ENCODE measurements at regions of chr22 and their contacts with region 1.

Region 1: DNA sequence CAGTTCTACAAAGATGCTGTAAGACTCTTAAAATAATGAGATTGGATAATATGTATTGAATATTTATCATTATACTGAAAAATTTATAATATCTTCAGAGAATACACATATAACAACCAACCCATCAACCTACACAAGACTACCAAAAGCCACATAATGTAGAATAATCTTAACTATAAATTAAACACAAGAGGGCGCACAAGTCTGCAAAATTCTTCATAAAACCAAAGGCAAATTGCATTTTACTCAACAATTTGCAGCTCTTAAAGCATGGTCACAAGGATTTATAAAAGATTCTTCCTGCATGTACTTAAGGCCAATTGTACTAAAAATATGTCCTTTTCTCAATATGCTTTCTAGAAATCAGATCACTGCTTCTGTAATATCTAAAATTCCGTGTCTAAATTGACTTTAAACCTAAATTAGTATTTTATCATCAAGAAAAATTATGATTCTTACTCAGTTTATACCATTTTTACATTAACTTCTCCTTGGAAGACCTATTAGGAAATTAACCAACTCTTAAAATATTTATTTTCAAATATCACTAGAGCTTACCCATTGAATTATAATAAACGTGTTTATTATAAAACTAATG is 79.0 kb downstream of the TTC28 start:
- DNase-seq: peak in 7 of 9 donors; percentile 30 to 66 (median 57)
- ATAC-seq: no peak
- H3K4me3 ChIP-seq: no peak overlapping the region
- H3K4me3 Mint-ChIP-seq: no peak overlapping the region
- H3K27ac ChIP-seq: no peak overlapping the region
- H3K27ac Mint-ChIP-seq: no peak overlapping the region
- H3K4me1 ChIP-seq: no peaks in the 10 kb centered on the region
- H3K4me1 Mint-ChIP-seq: no peaks in the 10 kb centered on the region
- H3K27me3 ChIP-seq: peaks cover 4 to 7% of the 10 kb centered on the region in 2 donors
- H3K27me3 Mint-ChIP-seq: peaks cover 10 to 64% (median 31%) of the 10 kb centered on the region in 5 donors

Region 2: DNA sequence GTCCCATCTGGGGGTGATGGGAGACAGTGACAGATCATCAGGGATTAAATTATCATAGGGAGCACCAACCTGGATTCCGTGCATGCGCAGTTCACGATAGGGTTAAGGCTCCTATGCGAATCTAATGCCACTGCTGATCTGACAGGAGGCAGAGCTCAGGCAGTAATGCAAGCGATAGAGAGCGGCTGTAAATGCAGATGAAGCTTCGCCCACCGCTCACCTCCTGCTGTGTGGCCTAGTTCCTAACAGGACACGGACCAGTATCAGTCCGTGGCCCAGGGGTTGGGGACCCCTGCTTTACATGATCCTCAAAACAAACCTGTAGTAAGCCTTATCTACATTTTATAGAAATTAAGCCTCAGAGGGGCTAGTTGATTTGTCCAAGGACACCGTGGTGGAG is 15.3 kb before region 1 on chr22:
- CTCF ChIA-PET with region 1: no interaction called
- POLR2A ChIA-PET with region 1: no interaction called
- intact Hi-C with region 1: no loop called
- DNase-seq: no peak
- ATAC-seq: no peak
- H3K4me3 ChIP-seq: no peak overlapping the region
- H3K4me3 Mint-ChIP-seq: no peak overlapping the region
- H3K27ac ChIP-seq: no peak overlapping the region
- H3K27ac Mint-ChIP-seq: no peak overlapping the region
- H3K4me1 ChIP-seq: no peaks in the 10 kb centered on the region
- H3K4me1 Mint-ChIP-seq: no peaks in the 10 kb centered on the region
- H3K27me3 ChIP-seq: no peaks in the 10 kb centered on the region
- H3K27me3 Mint-ChIP-seq: peaks cover 7 to 27% (median 22%) of the 10 kb centered on the region in 5 donors

Region 3: DNA sequence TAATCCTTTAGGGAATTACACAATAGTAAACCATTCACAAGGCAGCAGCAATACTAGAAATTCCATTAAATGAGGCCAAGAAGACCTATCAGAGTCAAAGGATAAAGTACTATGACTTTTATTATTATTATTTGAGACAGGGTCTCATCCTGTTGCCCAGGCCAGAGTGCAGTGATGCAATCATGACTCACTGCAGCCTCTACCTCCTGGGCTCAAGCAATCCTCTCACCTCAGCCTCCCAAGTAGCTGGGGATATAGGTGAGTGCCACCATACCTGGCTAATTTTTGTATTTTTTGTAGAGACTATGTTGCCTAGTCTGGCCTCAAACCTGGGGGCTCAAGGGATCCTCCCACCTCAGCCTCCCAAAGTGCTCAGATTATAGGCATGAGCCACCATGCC is 27.1 kb after region 1 on chr22:
- CTCF ChIA-PET with region 1: no interaction called
- POLR2A ChIA-PET with region 1: no interaction called
- intact Hi-C with region 1: no loop called
- DNase-seq: no peak
- ATAC-seq: no peak
- H3K4me3 ChIP-seq: no peak overlapping the region
- H3K4me3 Mint-ChIP-seq: no peak overlapping the region
- H3K27ac ChIP-seq: no peak overlapping the region
- H3K27ac Mint-ChIP-seq: no peak overlapping the region
- H3K4me1 ChIP-seq: no peaks in the 10 kb centered on the region
- H3K4me1 Mint-ChIP-seq: peaks cover 0 to 9% (median 0%) of the 10 kb centered on the region in 7 donors
- H3K27me3 ChIP-seq: peaks cover 0 to 3% of the 10 kb centered on the region in 2 donors
- H3K27me3 Mint-ChIP-seq: peaks cover 42 to 84% (median 68%) of the 10 kb centered on the region in 5 donors

Region 4: DNA sequence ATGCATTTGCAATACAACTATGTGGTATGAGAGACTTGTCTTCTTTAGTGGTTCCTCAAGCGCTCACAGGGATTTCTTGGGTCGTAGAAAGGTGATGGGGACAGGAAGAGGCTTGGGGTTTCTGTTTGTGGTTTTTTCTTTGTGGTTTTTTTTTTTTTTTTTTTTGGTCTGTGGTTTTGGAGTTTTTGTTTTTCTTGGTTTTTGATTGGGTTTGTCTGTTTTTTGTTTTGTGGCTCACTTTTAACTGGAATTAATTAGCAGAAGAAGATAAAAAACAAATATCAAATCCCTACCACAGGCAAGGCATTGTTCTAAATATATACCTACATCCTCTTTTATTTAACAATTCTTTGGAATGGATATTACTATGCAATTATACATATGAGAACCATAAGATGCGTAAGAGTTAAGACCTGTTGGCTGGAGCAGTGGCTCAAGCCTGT is 73.5 kb after region 1 on chr22:
- CTCF ChIA-PET with region 1: no interaction called
- POLR2A ChIA-PET with region 1: no interaction called
- intact Hi-C with region 1: loop called in 1 of 2 experiments (anchors 2 kb)
- DNase-seq: peak in 7 of 9 donors; percentile 57 to 75 (median 61)
- ATAC-seq: peak; percentile 91
- H3K4me3 ChIP-seq: no peak overlapping the region
- H3K4me3 Mint-ChIP-seq: peak overlapping the region in 9 of 10 donors; percentile 70 to 95 (median 78)
- H3K27ac ChIP-seq: no peak overlapping the region
- H3K27ac Mint-ChIP-seq: peak overlapping the region; percentile 88 to 100 (median 98)
- H3K4me1 ChIP-seq: peaks cover 16 to 17% of the 10 kb centered on the region in 2 donors
- H3K4me1 Mint-ChIP-seq: peaks cover 23 to 35% (median 34%) of the 10 kb centered on the region in 7 donors
- H3K27me3 ChIP-seq: peaks cover 10 to 42% of the 10 kb centered on the region in 2 donors
- H3K27me3 Mint-ChIP-seq: peaks cover 47 to 83% (median 66%) of the 10 kb centered on the region in 5 donors

Region 5: GRCh38 chr22:28791841-28792490 is 191.3 kb after region 1 on chr22:
- CTCF ChIA-PET with region 1: interaction called, 4 read pairs
- POLR2A ChIA-PET with region 1: no interaction called
- intact Hi-C with region 1: loop called in 1 of 2 experiments (anchors 1 kb)
- DNase-seq: no peak
- ATAC-seq: peak; percentile 23
- H3K4me3 ChIP-seq: no peak overlapping the region
- H3K4me3 Mint-ChIP-seq: peak overlapping the region in 5 of 10 donors; percentile 10 to 40 (median 34)
- H3K27ac ChIP-seq: no peak overlapping the region
- H3K27ac Mint-ChIP-seq: peak overlapping the region; percentile 12 to 97 (median 63)
- H3K4me1 ChIP-seq: peaks cover 22 to 34% of the 10 kb centered on the region in 2 donors
- H3K4me1 Mint-ChIP-seq: peaks cover 38 to 74% (median 66%) of the 10 kb centered on the region in 7 donors
- H3K27me3 ChIP-seq: no peaks in the 10 kb centered on the region
- H3K27me3 Mint-ChIP-seq: no peaks in the 10 kb centered on the region

Region 6: GRCh38 chr22:28829358-28830181 is 228.9 kb after region 1 on chr22:
- CTCF ChIA-PET with region 1: interaction called, 34 read pairs
- POLR2A ChIA-PET with region 1: interaction called, 15 read pairs
- intact Hi-C with region 1: loop called (anchors 1 kb)
- DNase-seq: peak; percentile 50 to 74 (median 69)
- ATAC-seq: peak; percentile 95
- H3K4me3 ChIP-seq: no peak overlapping the region
- H3K4me3 Mint-ChIP-seq: peak overlapping the region; percentile 39 to 75 (median 59)
- H3K27ac ChIP-seq: no peak overlapping the region
- H3K27ac Mint-ChIP-seq: peak overlapping the region in 6 of 9 donors; percentile 33 to 87 (median 66)
- H3K4me1 ChIP-seq: peaks cover 6 to 7% of the 10 kb centered on the region in 2 donors
- H3K4me1 Mint-ChIP-seq: peaks cover 8 to 44% (median 27%) of the 10 kb centered on the region in 7 donors
- H3K27me3 ChIP-seq: no peaks in the 10 kb centered on the region
- H3K27me3 Mint-ChIP-seq: no peaks in the 10 kb centered on the region

Region 7: DNA sequence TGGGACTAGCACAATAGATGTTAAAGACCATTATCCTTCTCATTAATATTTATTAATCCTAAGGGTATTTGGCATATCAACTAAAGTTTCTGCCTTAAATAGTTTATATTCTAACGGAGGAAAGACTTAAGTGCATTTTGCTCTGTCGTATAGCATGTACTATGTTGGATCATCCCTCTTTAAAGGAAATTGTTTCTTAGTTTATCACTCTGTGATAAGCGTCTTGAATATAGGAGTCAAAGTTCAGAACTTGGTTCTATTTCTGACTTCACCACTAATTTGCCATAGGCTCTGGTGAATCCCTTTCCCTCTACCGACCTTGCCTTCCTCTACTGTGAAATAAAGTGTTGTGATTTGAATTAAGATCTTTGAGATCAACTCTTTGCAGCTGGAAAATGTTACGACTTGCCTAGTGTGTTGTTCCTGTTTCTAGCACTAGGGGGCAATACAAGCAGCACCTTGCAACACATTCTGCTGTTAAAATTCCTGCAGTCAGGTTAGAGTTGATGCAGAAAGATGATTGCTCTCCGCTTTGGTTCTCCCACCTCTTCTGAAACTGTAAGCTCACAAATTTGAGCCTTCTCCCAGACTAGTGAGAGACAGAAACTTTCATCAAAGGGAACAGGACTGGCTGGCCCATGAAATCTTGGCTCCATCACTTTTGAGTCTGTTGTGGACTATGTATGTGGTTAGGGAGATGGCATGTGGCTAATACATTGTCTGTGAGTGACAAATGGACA is 254.9 kb after region 1 on chr22:
- CTCF ChIA-PET with region 1: no interaction called
- POLR2A ChIA-PET with region 1: no interaction called
- intact Hi-C with region 1: loop called (anchors 1 kb)
- DNase-seq: peak in 8 of 9 donors; percentile 29 to 70 (median 58)
- ATAC-seq: peak; percentile 68
- H3K4me3 ChIP-seq: no peak overlapping the region
- H3K4me3 Mint-ChIP-seq: no peak overlapping the region
- H3K27ac ChIP-seq: no peak overlapping the region
- H3K27ac Mint-ChIP-seq: no peak overlapping the region
- H3K4me1 ChIP-seq: no peaks in the 10 kb centered on the region
- H3K4me1 Mint-ChIP-seq: no peaks in the 10 kb centered on the region
- H3K27me3 ChIP-seq: no peaks in the 10 kb centered on the region
- H3K27me3 Mint-ChIP-seq: peaks cover 3 to 18% (median 5%) of the 10 kb centered on the region in 5 donors

Region 8: GRCh38 chr22:28899199-28899853 is 298.7 kb after region 1 on chr22:
- CTCF ChIA-PET with region 1: no interaction called
- POLR2A ChIA-PET with region 1: no interaction called
- intact Hi-C with region 1: no loop called
- DNase-seq: peak in 7 of 9 donors; percentile 19 to 67 (median 58)
- ATAC-seq: peak; percentile 89
- H3K4me3 ChIP-seq: no peak overlapping the region
- H3K4me3 Mint-ChIP-seq: peak overlapping the region in 8 of 10 donors; percentile 0 to 71 (median 48)
- H3K27ac ChIP-seq: no peak overlapping the region
- H3K27ac Mint-ChIP-seq: peak overlapping the region in 4 of 9 donors; percentile 2 to 86 (median 54)
- H3K4me1 ChIP-seq: peaks cover 6 to 7% of the 10 kb centered on the region in 2 donors
- H3K4me1 Mint-ChIP-seq: peaks cover 11 to 33% (median 22%) of the 10 kb centered on the region in 7 donors
- H3K27me3 ChIP-seq: no peaks in the 10 kb centered on the region
- H3K27me3 Mint-ChIP-seq: peaks cover 0 to 61% (median 5%) of the 10 kb centered on the region in 5 donors

Region 9: GRCh38 chr22:29154364-29155048 is 553.9 kb after region 1 on chr22:
- CTCF ChIA-PET with region 1: no interaction called
- POLR2A ChIA-PET with region 1: no interaction called
- intact Hi-C with region 1: loop called in 1 of 2 experiments (anchors 1 kb)
- DNase-seq: peak; percentile 21 to 82 (median 58)
- ATAC-seq: peak; percentile 82
- H3K4me3 ChIP-seq: no peak overlapping the region
- H3K4me3 Mint-ChIP-seq: peak overlapping the region in 8 of 10 donors; percentile 25 to 68 (median 56)
- H3K27ac ChIP-seq: no peak overlapping the region
- H3K27ac Mint-ChIP-seq: no peak overlapping the region
- H3K4me1 ChIP-seq: no peaks in the 10 kb centered on the region
- H3K4me1 Mint-ChIP-seq: peaks cover 7 to 18% (median 8%) of the 10 kb centered on the region in 7 donors
- H3K27me3 ChIP-seq: no peaks in the 10 kb centered on the region
- H3K27me3 Mint-ChIP-seq: peaks cover 18 to 34% (median 26%) of the 10 kb centered on the region in 5 donors

Region 10: DNA sequence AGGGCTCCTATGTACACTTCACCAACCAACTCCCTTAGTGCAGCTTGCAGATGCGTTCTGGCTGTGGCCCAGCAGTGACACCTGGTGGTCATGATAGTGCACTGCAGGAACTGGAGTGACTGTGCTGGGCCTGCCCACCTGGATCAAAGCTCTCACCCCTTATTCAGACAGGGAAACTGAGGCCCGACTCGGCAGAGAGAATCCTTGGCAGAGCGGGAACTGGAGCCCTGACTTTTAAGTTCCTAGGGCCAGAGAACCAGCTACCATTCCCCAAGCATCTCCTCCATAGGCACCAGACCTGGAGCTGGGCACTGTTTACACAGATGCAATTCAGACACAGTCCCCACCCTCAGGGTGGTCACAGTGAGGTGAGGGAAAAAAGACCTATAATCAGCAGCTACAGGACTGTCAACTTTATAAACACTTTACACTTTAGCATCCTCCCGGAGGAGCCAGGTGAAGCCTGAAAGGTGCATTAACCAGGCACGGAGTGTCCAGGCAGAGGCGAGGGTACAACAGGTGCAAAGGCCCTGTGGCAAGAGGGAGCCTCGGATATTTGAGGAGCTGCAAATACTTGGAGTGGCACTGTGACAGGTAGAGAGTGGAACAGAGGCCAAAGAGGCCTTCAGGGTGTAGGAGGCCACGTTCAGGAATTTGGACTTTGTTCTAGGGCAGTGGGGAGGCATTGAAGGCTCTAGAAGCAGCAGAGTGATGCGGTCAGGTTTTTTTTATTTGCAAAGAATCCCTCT is 645.2 kb after region 1 on chr22:
- CTCF ChIA-PET with region 1: interaction called, 4 read pairs
- POLR2A ChIA-PET with region 1: no interaction called
- intact Hi-C with region 1: loop called in 1 of 2 experiments (anchors 2 kb)
- DNase-seq: peak; percentile 31 to 68 (median 58)
- ATAC-seq: peak; percentile 95
- H3K4me3 ChIP-seq: no peak overlapping the region
- H3K4me3 Mint-ChIP-seq: no peak overlapping the region
- H3K27ac ChIP-seq: no peak overlapping the region
- H3K27ac Mint-ChIP-seq: peak overlapping the region in 1 of 9 donors; percentile 58
- H3K4me1 ChIP-seq: no peaks in the 10 kb centered on the region
- H3K4me1 Mint-ChIP-seq: peaks cover 0 to 4% (median 0%) of the 10 kb centered on the region in 7 donors
- H3K27me3 ChIP-seq: no peaks in the 10 kb centered on the region
- H3K27me3 Mint-ChIP-seq: peaks cover 5 to 23% (median 10%) of the 10 kb centered on the region in 5 donors